ENCODE measurements at regions of chr12 and their contacts with region 1.

Region 1: GRCh38 chr12:65335021-65335714 is 56.7 kb downstream of the MSRB3 start:
- DNase-seq: peak; percentile 58 to 66
- H3K4me3 ChIP-seq: no peak overlapping the region
- H3K4me3 Mint-ChIP-seq: peak overlapping the region; percentile 64
- H3K27ac Mint-ChIP-seq: peak overlapping the region; percentile 64
- H3K4me1 ChIP-seq: peaks cover 25% of the 10 kb centered on the region
- H3K4me1 Mint-ChIP-seq: peaks cover 21% of the 10 kb centered on the region
- H3K27me3 ChIP-seq: no peaks in the 10 kb centered on the region
- H3K27me3 Mint-ChIP-seq: no peaks in the 10 kb centered on the region
- CTCF ChIP-seq: no peak

Region 2: GRCh38 chr12:65296508-65297265 is 38.5 kb before region 1 on chr12:
- CTCF ChIA-PET with region 1: no interaction called
- POLR2A ChIA-PET with region 1: no interaction called
- intact Hi-C with region 1: no loop called
- DNase-seq: no peak
- H3K4me3 ChIP-seq: no peak overlapping the region
- H3K4me3 Mint-ChIP-seq: no peak overlapping the region
- H3K27ac Mint-ChIP-seq: no peak overlapping the region
- H3K4me1 ChIP-seq: no peaks in the 10 kb centered on the region
- H3K4me1 Mint-ChIP-seq: no peaks in the 10 kb centered on the region
- H3K27me3 ChIP-seq: no peaks in the 10 kb centered on the region
- H3K27me3 Mint-ChIP-seq: no peaks in the 10 kb centered on the region
- CTCF ChIP-seq: no peak

Region 3: DNA sequence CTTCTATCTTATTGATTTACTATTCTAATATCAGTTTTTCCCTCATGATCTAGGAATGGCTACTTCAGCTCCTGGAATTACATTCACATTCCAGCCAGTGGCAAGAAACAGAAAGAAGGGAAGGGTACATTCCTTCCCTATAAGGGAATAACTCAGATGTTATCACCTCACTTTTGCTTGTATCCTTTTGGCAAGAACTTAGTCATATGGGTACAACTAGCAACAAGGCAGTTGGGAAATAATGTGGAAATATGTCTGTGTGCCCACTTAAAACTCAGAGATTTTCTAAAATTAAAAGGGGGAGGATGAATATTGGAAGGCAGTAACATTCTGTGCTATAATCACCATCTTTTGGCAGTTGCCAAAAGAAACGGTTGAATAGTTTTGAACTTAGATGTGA is 28.9 kb after region 1 on chr12:
- CTCF ChIA-PET with region 1: no interaction called
- POLR2A ChIA-PET with region 1: no interaction called
- intact Hi-C with region 1: no loop called
- DNase-seq: no peak
- H3K4me3 ChIP-seq: no peak overlapping the region
- H3K4me3 Mint-ChIP-seq: no peak overlapping the region
- H3K27ac Mint-ChIP-seq: no peak overlapping the region
- H3K4me1 ChIP-seq: no peaks in the 10 kb centered on the region
- H3K4me1 Mint-ChIP-seq: no peaks in the 10 kb centered on the region
- H3K27me3 ChIP-seq: no peaks in the 10 kb centered on the region
- H3K27me3 Mint-ChIP-seq: no peaks in the 10 kb centered on the region
- CTCF ChIP-seq: no peak

Region 4: GRCh38 chr12:65389436-65389835 is 54.3 kb after region 1 on chr12:
- CTCF ChIA-PET with region 1: no interaction called
- POLR2A ChIA-PET with region 1: no interaction called
- intact Hi-C with region 1: loop called (anchors 10 kb)
- DNase-seq: no peak
- H3K4me3 ChIP-seq: no peak overlapping the region
- H3K4me3 Mint-ChIP-seq: no peak overlapping the region
- H3K27ac Mint-ChIP-seq: no peak overlapping the region
- H3K4me1 ChIP-seq: peaks cover 5% of the 10 kb centered on the region; the same call in 1 of the 2 replicates
- H3K4me1 Mint-ChIP-seq: no peaks in the 10 kb centered on the region
- H3K27me3 ChIP-seq: no peaks in the 10 kb centered on the region
- H3K27me3 Mint-ChIP-seq: peaks cover 5% of the 10 kb centered on the region
- CTCF ChIP-seq: no peak

Measured in Caco-2 (cell line).